ENCODE measurements at regions of chr12 and their contacts with region 1.

Region 1: GRCh38 chr12:47876440-47876960 is 28.3 kb downstream of the VDR start:
- DNase-seq: peak; percentile 93
- H3K4me3 ChIP-seq: no peak overlapping the region
- H3K27ac ChIP-seq: peak overlapping the region; percentile 9
- H3K4me1 ChIP-seq: peaks cover 34% of the 10 kb centered on the region
- H3K27me3 ChIP-seq: no peaks in the 10 kb centered on the region
- CTCF ChIP-seq: peak; percentile 23 to 42

Region 2: GRCh38 chr12:47812797-47813510 is 63.5 kb before region 1 on chr12:
- CTCF ChIA-PET with region 1: no interaction called
- dilution Hi-C with region 1: loop called (anchors 5 kb)
- in situ Hi-C with region 1: no loop called
- intact Hi-C with region 1: no loop called
- DNase-seq: peak; percentile 79
- H3K4me3 ChIP-seq: peak overlapping the region; percentile 21 to 28 (median 23)
- H3K27ac ChIP-seq: peak overlapping the region; percentile 62
- H3K4me1 ChIP-seq: peaks cover 66% of the 10 kb centered on the region
- H3K27me3 ChIP-seq: no peaks in the 10 kb centered on the region
- CTCF ChIP-seq: no peak

Region 3: DNA sequence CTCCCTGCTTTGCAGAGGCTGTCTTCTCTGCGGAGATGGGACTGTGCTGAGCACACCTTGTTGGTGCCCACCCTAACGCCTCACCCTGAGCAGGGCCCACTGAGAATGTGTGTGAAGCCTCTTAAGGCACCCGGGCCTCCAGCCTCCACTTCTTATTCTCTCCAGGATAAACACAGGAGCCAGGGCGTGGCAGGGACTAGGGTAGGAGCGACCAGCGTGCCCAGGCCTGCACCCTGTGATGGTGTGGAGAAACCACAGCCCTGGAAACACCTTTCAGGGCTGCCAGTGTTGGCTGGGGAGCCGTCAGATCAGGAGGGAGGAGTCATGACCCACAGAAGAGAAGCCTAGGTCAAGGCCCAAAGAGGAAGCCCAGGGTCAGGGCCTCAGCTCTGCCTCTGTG is 13.0 kb before region 1 on chr12:
- CTCF ChIA-PET with region 1: no interaction called
- dilution Hi-C with region 1: no loop called
- in situ Hi-C with region 1: no loop called
- intact Hi-C with region 1: loop called (anchors 1 kb)
- DNase-seq: peak; percentile 91
- H3K4me3 ChIP-seq: no peak overlapping the region
- H3K27ac ChIP-seq: peak overlapping the region; percentile 76
- H3K4me1 ChIP-seq: peaks cover 46% of the 10 kb centered on the region
- H3K27me3 ChIP-seq: no peaks in the 10 kb centered on the region
- CTCF ChIP-seq: no peak

Region 4: DNA sequence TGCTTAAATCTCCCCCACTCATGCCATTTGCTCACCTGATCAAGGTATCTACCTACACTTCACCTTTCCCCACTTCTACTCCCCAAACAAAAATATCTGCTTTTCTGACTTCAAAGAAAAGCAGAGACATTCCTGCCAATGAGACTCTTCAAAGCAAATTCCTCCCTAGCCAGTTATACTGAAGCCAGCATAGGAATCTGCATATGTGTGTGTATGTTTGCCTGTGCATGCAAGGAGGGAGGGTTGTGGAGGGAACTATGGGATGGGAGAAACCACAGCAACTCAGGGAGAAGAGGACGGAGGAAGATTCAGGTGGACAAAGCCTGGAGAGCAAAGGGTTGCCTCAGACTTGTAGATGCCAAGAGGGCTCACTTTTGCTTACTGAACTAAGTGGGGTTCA is 54.7 kb after region 1 on chr12:
- CTCF ChIA-PET with region 1: no interaction called
- dilution Hi-C with region 1: loop called (anchors 5 kb)
- in situ Hi-C with region 1: no loop called
- intact Hi-C with region 1: no loop called
- DNase-seq: no peak
- H3K4me3 ChIP-seq: no peak overlapping the region
- H3K27ac ChIP-seq: no peak overlapping the region
- H3K4me1 ChIP-seq: no peaks in the 10 kb centered on the region
- H3K27me3 ChIP-seq: no peaks in the 10 kb centered on the region
- CTCF ChIP-seq: no peak